Esophagus muscularis mucosa (tissue), 4 donors: ENCODE measurements at regions of chr3 and their contacts with region 1.

Region 1: GRCh38 chr3:192444096-192444790 is 283.1 kb downstream of the FGF12 start:
- DNase-seq: no peak
- H3K4me3 ChIP-seq: no peak overlapping the region
- H3K27ac ChIP-seq: no peak overlapping the region
- H3K4me1 ChIP-seq: peaks cover 0 to 9% (median 5%) of the 10 kb centered on the region in 4 donors
- H3K27me3 ChIP-seq: peaks cover 0 to 15% (median 0%) of the 10 kb centered on the region in 4 donors
- CTCF ChIP-seq: peak; percentile 93 to 99 (median 97)
- EP300 ChIP-seq: no peak
- POLR2A ChIP-seq: no peak

Region 2: GRCh38 chr3:191414732-191415131 is 1029.5 kb before region 1 on chr3:
- intact Hi-C with region 1: loop called (anchors 5 kb)
- DNase-seq: no peak
- H3K4me3 ChIP-seq: no peak overlapping the region
- H3K27ac ChIP-seq: no peak overlapping the region
- H3K4me1 ChIP-seq: no peaks in the 10 kb centered on the region
- H3K27me3 ChIP-seq: no peaks in the 10 kb centered on the region
- CTCF ChIP-seq: no peak
- EP300 ChIP-seq: no peak
- POLR2A ChIP-seq: no peak

Region 3: DNA sequence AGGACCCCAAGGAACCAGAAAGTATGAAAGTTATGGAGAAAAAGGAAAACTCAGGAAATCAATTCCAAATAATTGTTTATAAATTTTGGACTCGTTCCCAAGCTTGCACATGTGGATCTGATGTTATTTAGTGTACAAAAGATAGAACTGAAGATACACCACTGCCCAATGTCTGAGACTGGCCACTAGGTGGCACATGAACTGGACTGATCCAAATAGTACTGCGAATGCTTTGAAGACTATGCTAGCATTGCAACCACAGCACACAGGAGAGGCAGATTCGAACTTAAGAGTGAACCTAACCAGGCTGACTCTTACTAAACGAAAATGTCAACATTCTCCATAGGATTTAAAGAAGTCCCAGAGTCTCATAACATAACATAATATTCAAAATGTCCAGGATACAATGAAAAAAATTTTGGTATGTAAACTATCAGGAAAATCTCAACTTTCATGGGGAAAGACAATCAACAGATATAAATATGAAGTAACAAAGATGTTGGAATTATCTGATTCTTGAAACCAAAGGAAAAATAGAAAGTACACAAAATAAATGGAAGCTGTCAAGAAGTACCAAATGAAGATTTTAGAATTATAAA is 313.6 kb before region 1 on chr3:
- intact Hi-C with region 1: loop called (anchors 2 kb)
- DNase-seq: no peak
- H3K4me3 ChIP-seq: no peak overlapping the region
- H3K27ac ChIP-seq: no peak overlapping the region
- H3K4me1 ChIP-seq: peaks cover 0 to 11% (median 6%) of the 10 kb centered on the region in 4 donors
- H3K27me3 ChIP-seq: no peaks in the 10 kb centered on the region
- CTCF ChIP-seq: peak; percentile 64 to 78 (median 67)
- EP300 ChIP-seq: no peak
- POLR2A ChIP-seq: no peak

Region 4: GRCh38 chr3:192188218-192188835 is 255.9 kb before region 1 on chr3:
- intact Hi-C with region 1: loop called (anchors 5 kb)
- DNase-seq: no peak
- H3K4me3 ChIP-seq: no peak overlapping the region
- H3K27ac ChIP-seq: no peak overlapping the region
- H3K4me1 ChIP-seq: peaks cover 0 to 3% (median 0%) of the 10 kb centered on the region in 4 donors
- H3K27me3 ChIP-seq: no peaks in the 10 kb centered on the region
- CTCF ChIP-seq: peak; percentile 56 to 68 (median 58)
- EP300 ChIP-seq: no peak
- POLR2A ChIP-seq: no peak